ENCODE measurements at regions of chr10 and their contacts with region 1.

Region 1: DNA sequence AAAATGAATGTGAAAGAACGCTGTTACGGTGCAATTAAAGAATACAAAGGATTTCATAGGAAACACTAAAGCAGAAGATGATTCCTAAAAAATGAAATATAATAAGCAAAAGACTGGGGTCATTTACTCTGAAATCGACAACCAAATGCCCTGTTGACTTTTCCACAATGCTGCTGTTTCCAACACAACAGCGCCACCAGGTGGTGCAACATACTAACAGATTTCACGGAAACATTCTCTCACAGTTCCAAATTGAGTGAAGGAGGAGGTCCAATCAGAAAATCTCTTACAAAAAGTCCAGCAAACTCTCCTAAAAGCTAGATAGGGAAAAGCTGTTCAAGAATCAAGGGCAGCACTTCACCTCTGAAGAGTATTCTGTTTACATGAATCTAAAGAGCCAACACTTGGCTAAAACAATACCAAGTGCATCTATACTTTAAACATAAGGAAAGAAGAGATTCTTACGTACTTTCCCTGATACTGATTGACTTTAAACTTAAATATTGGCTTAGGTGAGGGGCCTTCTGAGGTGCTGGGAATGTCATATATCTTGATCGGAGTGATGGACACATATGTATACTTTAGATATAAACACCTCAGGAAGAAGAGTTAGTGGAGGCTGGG is 55.9 kb downstream of the UPF2 start:
- DNase-seq: peak; percentile 76
- ATAC-seq: peak; percentile 62
- H3K4me3 ChIP-seq: no peak overlapping the region
- H3K27ac ChIP-seq: peak overlapping the region; percentile 58
- H3K4me1 ChIP-seq: peaks cover 5% of the 10 kb centered on the region; the same call in 1 of the 2 replicates
- H3K27me3 ChIP-seq: no peaks in the 10 kb centered on the region
- CTCF ChIP-seq: peak; percentile 82

Region 2: DNA sequence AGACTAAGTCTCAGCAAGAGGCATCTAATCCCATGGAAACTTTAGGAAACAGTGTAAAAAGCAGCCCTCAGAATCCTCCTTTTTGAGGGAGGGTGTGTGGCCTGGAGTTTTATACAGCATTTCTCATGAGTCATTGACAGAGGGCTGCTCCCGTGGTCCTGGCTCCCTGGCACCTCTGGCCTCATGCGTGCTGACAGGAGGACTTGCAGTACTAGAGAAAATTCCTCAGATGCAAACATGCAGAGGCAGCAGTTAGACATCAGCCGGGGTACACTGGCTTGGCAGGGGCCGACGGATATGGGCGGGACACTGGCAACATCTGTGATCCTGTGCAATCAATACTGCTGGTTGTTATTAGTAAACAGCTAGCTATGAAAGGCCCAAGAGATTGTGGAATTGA is 1894.1 kb before region 1 on chr10:
- CTCF ChIA-PET with region 1: no interaction called
- POLR2A ChIA-PET with region 1: no interaction called
- intact Hi-C with region 1: no loop called
- DNase-seq: no peak
- ATAC-seq: no peak
- H3K4me3 ChIP-seq: no peak overlapping the region
- H3K27ac ChIP-seq: no peak overlapping the region
- H3K4me1 ChIP-seq: no peaks in the 10 kb centered on the region
- H3K27me3 ChIP-seq: no peaks in the 10 kb centered on the region
- CTCF ChIP-seq: no peak

Region 3: GRCh38 chr10:11874542-11875177 is 112.0 kb before region 1 on chr10:
- CTCF ChIA-PET with region 1: interaction called, 4 read pairs
- POLR2A ChIA-PET with region 1: no interaction called
- intact Hi-C with region 1: loop called (anchors 10 kb)
- DNase-seq: peak; percentile 68
- ATAC-seq: peak; percentile 12
- H3K4me3 ChIP-seq: no peak overlapping the region
- H3K27ac ChIP-seq: peak overlapping the region; percentile 99
- H3K4me1 ChIP-seq: peaks cover 21% of the 10 kb centered on the region
- H3K27me3 ChIP-seq: no peaks in the 10 kb centered on the region
- CTCF ChIP-seq: no peak